Activated CD4-positive, alpha-beta memory T cell treated with anti-CD3 and anti-CD28 coated beads for 36 hours (primary cell): ENCODE measurements at regions of chr6 and their contacts with region 1.

Region 1: GRCh38 chr6:139375232-139376016 is 976 bp upstream of the CITED2 start:
- DNase-seq: peak; percentile 89
- H3K4me3 Mint-ChIP-seq: peak overlapping the region; percentile 97
- H3K27ac Mint-ChIP-seq: peak overlapping the region; percentile 98
- H3K4me1 Mint-ChIP-seq: peaks cover 31% of the 10 kb centered on the region
- H3K27me3 Mint-ChIP-seq: no peaks in the 10 kb centered on the region

Region 2: GRCh38 chr6:139124887-139125672 is 250.3 kb before region 1 on chr6:
- CTCF ChIA-PET with region 1: interaction called, 12 read pairs
- POLR2A ChIA-PET with region 1: interaction called, 3 read pairs
- intact Hi-C with region 1: no loop called
- DNase-seq: peak; percentile 89
- H3K4me3 Mint-ChIP-seq: peak overlapping the region; percentile 43
- H3K27ac Mint-ChIP-seq: peak overlapping the region; percentile 93
- H3K4me1 Mint-ChIP-seq: peaks cover 52% of the 10 kb centered on the region
- H3K27me3 Mint-ChIP-seq: no peaks in the 10 kb centered on the region

Region 3: DNA sequence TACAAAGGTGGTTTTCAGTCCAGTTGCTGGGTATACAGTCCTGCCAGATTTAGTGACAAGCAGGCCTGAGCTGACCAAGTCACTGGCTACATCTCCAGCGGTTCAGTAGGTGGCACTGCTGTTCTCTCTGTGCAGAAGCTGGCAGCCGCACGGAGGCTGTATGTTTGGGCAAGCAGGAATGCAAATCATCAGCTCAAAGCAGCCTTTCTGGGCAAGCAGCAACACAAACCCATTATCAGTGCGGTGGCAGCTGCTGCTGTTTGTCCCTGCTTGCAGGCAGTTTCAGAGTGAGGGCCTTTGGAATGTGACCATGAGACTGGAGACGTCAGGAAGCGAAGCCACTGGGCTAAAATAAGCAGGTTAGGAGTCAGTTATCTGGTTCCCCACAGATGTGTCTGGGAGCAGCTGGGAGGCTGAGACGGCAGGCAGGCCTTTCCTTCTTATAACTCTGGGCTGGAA is 156.1 kb before region 1 on chr6:
- CTCF ChIA-PET with region 1: interaction called, 97 read pairs
- POLR2A ChIA-PET with region 1: interaction called, 5 read pairs
- intact Hi-C with region 1: no loop called
- DNase-seq: peak; percentile 83
- H3K4me3 Mint-ChIP-seq: peak overlapping the region; percentile 27
- H3K27ac Mint-ChIP-seq: no peak overlapping the region
- H3K4me1 Mint-ChIP-seq: peaks cover 7% of the 10 kb centered on the region
- H3K27me3 Mint-ChIP-seq: no peaks in the 10 kb centered on the region

Region 4: DNA sequence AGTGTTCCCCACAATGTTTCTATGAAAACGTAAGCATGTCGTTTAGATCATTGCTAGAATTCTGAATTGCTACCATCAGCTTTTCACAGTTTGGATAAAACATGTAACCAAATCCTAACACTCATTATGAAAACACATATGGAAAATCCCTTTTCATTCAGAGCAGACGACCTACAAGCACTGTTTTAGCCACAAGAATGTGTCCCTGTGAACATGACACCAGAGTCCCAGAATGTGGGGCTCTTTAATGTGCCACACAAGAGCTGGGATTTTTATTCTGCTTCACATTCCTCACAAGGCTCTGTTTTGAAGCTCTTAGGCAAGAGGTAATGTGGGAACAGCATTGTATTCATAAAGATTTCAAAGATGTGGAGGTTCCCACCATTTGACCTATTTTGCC is 140.1 kb after region 1 on chr6:
- CTCF ChIA-PET with region 1: interaction called, 4 read pairs
- POLR2A ChIA-PET with region 1: interaction called, 11 read pairs
- intact Hi-C with region 1: no loop called
- DNase-seq: no peak
- H3K4me3 Mint-ChIP-seq: no peak overlapping the region
- H3K27ac Mint-ChIP-seq: peak overlapping the region; percentile 76
- H3K4me1 Mint-ChIP-seq: peaks cover 32% of the 10 kb centered on the region
- H3K27me3 Mint-ChIP-seq: no peaks in the 10 kb centered on the region

Region 5: DNA sequence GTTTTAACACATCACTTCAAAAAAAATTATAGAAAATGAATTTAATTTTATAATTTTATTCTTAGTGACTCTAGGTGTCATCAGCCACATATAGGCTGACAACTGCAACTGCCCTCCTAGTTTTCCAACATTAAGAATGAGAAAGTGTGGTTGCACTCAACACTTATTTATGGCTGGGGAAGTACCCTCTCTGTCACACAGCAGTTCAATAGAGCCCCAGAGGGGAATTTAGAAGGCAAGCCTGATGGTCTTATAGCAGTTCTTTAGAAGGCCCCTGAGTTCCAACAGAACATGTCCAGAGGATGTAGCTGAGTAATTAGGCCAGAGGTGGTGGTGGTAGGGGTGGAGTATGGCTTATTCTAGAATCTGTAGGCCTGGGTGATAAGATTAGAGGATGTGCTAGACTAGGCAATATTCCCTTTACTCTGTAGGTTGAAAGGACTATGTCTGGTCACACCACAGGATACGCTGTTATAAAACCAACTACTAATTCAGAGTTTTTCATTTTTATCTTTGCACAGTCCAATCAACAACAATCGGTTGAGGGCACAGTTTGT is 225.6 kb after region 1 on chr6:
- CTCF ChIA-PET with region 1: interaction called, 6 read pairs
- POLR2A ChIA-PET with region 1: interaction called, 14 read pairs
- intact Hi-C with region 1: loop called (anchors 2 kb)
- DNase-seq: peak; percentile 29
- H3K4me3 Mint-ChIP-seq: no peak overlapping the region
- H3K27ac Mint-ChIP-seq: peak overlapping the region; percentile 10
- H3K4me1 Mint-ChIP-seq: peaks cover 7% of the 10 kb centered on the region
- H3K27me3 Mint-ChIP-seq: no peaks in the 10 kb centered on the region

Region 6: DNA sequence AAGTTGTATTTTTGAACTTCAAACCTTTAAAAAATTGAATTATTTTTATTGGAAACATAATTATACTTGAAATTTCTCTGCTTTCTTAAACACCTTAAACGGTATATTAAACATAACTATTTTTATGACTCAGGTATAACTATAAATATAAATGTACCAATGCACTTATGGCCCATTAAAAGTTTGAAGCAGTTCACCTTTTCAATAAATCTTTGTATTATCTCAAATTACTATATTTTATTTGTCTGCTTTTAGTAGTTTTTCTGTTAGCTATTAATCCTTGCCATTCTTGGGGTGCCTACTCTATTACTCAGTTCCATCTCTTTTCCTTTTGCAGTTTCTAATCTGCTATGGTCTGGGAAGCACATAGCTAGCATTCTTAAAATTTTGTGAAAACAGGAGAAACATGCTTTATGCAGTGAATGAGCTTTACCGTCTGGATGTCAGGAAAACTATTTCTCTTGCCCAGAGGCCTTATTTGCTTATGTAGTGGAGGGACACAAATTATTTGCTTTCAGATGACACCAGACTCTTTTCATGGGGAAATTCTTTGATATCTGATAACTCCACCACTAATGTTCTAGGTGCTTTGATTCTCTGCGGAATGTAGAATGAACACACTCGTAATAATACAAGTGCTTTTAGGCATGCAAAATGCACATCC is 377.9 kb after region 1 on chr6:
- CTCF ChIA-PET with region 1: no interaction called
- POLR2A ChIA-PET with region 1: no interaction called
- intact Hi-C with region 1: no loop called
- DNase-seq: no peak
- H3K4me3 Mint-ChIP-seq: no peak overlapping the region
- H3K27ac Mint-ChIP-seq: no peak overlapping the region
- H3K4me1 Mint-ChIP-seq: no peaks in the 10 kb centered on the region
- H3K27me3 Mint-ChIP-seq: no peaks in the 10 kb centered on the region

Region 7: DNA sequence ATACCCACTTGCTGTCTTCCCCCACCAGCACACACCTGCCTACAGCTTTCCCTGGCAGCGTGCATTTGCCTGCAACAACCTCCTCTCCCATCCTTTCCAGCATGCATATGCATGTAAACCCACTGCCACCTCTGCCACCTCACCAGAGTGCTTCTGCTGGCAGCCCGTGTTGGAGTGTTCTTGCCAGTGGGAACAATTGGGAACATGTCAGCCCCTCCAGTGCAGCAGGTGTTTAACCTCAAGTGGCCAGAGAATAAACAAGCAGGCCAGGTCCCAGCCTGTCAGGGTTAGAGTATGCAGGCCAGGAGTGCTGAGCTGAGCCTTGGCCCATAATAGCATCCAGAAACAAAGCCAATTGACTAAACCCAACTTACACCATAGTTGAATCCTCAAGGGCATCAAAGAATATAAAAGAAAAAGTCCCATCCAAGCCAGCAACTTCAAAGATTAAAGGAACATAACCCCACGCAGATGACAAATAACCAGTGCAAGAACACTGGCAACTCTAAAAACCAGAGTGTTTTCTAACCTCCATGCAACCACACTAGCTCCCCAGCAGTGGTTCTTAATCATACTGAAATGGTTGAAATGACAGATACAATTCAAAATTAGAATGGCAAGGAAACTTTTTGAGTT is 1211.1 kb after region 1 on chr6:
- CTCF ChIA-PET with region 1: no interaction called
- POLR2A ChIA-PET with region 1: no interaction called
- intact Hi-C with region 1: loop called (anchors 2 kb)
- DNase-seq: peak; percentile 50
- H3K4me3 Mint-ChIP-seq: no peak overlapping the region
- H3K27ac Mint-ChIP-seq: peak overlapping the region; percentile 49
- H3K4me1 Mint-ChIP-seq: peaks cover 28% of the 10 kb centered on the region
- H3K27me3 Mint-ChIP-seq: peaks cover 10% of the 10 kb centered on the region